ENCODE measurements at regions of chr6 and their contacts with region 1.

Region 1: GRCh38 chr6:31139599-31139998 is 733 bp upstream of the PSORS1C2 start:
- DNase-seq: no peak
- CTCF ChIP-seq: no peak

Region 2: GRCh38 chr6:29705389-29706231 is 1434.0 kb before region 1 on chr6:
- in situ Hi-C with region 1: no loop called
- DNase-seq: no peak
- CTCF ChIP-seq: peak; percentile 59

Region 3: DNA sequence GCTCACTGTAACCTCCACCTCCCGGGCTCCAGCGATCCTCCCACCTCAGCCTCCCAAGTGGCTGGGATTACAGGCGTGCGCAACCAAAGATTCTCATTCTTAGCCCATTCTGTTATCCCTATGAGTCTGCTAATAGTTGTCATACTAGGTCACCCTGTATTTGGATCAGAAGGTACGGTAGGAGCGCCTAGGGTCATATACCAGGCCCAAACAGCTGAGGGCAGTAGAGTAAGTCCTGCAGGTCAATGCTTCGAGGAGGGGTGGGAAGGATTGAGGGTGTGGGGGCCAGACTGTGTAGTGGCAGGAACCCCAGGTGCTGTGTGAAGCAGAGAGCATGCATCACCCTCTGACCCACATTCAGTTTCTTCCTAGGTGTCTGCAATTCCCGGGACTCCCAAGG is 53.6 kb after region 1 on chr6:
- in situ Hi-C with region 1: loop called (anchors 5 kb)
- DNase-seq: no peak
- CTCF ChIP-seq: no peak

Region 4: GRCh38 chr6:31216208-31216898 is 76.8 kb after region 1 on chr6:
- in situ Hi-C with region 1: no loop called
- DNase-seq: no peak
- CTCF ChIP-seq: no peak

Region 5: GRCh38 chr6:31366693-31367470 is 227.3 kb after region 1 on chr6:
- in situ Hi-C with region 1: loop called (anchors 10 kb)
- DNase-seq: peak; percentile 75
- CTCF ChIP-seq: peak; percentile 88

Measured in GM13977 (cell line).